Left ventricle myocardium inferior (tissue), 1 donor: ENCODE measurements at regions of chr2 and their contacts with region 1.

Region 1: GRCh38 chr2:118855451-118856279 is 8.2 kb upstream of the EN1 start:
- DNase-seq: peak; percentile 71
- H3K4me3 ChIP-seq: peak overlapping the region; percentile 50
- H3K27ac ChIP-seq: no peak overlapping the region
- H3K4me1 ChIP-seq: peaks cover 55% of the 10 kb centered on the region
- H3K27me3 ChIP-seq: peaks cover 100% of the 10 kb centered on the region
- CTCF ChIP-seq: no peak

Region 2: GRCh38 chr2:118046634-118047210 is 808.9 kb before region 1 on chr2:
- intact Hi-C with region 1: loop called (anchors 10 kb)
- DNase-seq: no peak
- H3K4me3 ChIP-seq: no peak overlapping the region
- H3K27ac ChIP-seq: no peak overlapping the region
- H3K4me1 ChIP-seq: no peaks in the 10 kb centered on the region
- H3K27me3 ChIP-seq: peaks cover 92% of the 10 kb centered on the region
- CTCF ChIP-seq: peak; percentile 68

Region 3: GRCh38 chr2:118221666-118222594 is 633.7 kb before region 1 on chr2:
- intact Hi-C with region 1: loop called (anchors 5 kb)
- DNase-seq: no peak
- H3K4me3 ChIP-seq: no peak overlapping the region
- H3K27ac ChIP-seq: no peak overlapping the region
- H3K4me1 ChIP-seq: peaks cover 16% of the 10 kb centered on the region
- H3K27me3 ChIP-seq: peaks cover 100% of the 10 kb centered on the region
- CTCF ChIP-seq: peak; percentile 69